Activated T-helper 1 cell treated with anti-CD3 and anti-CD28 coated beads, Interleukin-12 subunit alpha, Interleukin-12 subunit beta, Interleukin-2, Interleukin-4 antibody, amounts not matched to agents 30 ng/mL and 10 ng/mL and 1 ng/mL, durations not matched to agents 14 hours and 24 hours and 36 hours (primary cell): ENCODE measurements at regions of chr12 and their contacts with region 1.

Region 1: DNA sequence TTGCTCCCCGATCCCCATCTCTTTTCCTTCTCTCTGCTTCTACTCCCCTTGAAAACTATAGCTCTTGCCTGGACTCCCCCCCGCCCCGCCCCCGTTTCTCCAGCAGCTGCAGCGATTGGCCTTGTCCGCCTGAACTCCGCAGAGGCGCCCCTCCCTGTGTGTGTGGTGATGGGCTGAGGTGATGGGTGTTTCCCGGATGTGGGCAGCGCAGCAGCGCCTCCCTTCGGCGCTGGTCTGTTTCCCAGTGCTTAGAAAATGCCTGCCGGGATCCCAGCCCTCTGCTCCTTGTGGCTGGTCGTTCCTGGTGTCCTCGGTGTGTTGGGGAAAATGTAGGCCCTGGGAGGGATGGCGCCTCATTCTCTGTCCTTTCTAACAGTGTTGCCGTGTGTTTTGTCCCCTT is 43.3 kb downstream of the GALNT8 start:
- DNase-seq: no peak
- H3K4me3 Mint-ChIP-seq: no peak overlapping the region
- H3K27ac Mint-ChIP-seq: no peak overlapping the region
- H3K4me1 Mint-ChIP-seq: no peaks in the 10 kb centered on the region
- H3K27me3 Mint-ChIP-seq: peaks cover 2% of the 10 kb centered on the region

Region 2: DNA sequence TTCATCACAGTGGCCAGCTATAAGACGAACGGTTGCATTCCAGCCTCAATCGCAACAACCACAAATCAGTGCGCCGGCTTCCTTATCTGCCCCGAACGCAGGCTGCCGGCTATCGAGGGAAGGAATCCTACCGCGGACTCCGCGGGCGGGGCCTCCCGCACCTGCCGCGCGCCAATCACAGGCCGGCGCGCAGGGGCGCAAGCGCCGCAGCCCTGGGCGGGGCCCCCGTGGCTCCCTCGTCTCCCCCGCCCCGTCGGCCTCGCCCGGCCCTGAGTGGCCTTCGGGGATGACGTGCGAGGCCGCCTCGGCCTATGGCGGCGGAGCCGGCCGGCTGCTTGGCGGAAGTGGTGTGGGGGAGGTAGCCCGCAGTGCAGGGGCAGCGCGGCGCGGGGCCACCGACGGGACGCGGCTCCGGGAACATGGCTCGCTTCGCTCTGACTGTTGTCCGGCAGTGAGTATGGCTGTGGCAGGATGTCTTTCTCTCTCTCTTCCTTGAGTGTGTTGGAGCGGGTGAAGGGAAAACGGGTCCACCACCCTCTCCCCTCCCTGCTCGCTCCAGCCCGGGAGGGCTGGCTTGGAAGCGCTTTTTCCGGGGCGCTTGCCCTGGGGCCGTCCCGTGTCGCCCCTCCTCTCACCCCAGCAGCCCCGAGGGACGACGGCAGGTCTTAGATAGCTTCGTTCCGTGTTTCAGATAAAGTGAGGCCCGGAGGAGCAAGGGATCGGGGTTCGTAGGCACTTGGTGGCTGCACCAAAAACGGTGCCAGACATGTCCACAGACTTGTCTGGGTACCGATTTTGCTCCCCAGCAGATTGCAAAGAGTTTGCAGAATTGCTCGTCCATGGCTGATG is 442.5 kb before region 1 on chr12 and contains the start of gene TIGAR:
- intact Hi-C with region 1: no loop called
- DNase-seq: peak; percentile 93
- H3K4me3 Mint-ChIP-seq: peak within 1 kb of the TSS; percentile 93
- H3K27ac Mint-ChIP-seq: peak within 1 kb of the TSS; percentile 93
- H3K4me1 Mint-ChIP-seq: peaks cover 45% of the 10 kb centered on the region
- H3K27me3 Mint-ChIP-seq: no peaks in the 10 kb centered on the region
- total RNA-seq, gene TIGAR: 14.4 TPM in 2 replicates

Region 3: DNA sequence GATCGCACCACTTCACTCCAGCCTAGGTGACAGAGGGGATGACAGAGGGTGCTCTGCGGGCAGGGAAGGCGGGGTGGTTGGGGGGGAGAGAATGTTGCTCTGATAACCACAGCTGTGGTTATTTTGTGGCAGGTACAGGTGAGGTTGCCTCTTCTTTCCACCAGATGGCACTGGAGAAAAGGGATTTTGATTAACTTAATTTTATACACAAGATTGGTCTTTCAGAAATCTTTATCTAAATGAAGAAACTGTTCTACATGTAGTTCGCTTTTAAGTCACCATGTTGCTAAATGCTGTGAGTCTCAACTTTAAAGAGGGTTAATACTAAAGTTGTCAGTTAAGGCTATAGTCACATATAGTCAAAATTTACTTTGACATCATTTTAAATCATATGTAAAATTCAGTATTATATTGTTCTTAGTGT is 409.8 kb before region 1 on chr12:
- intact Hi-C with region 1: loop called (anchors 2 kb)
- DNase-seq: no peak
- H3K4me3 Mint-ChIP-seq: no peak overlapping the region
- H3K27ac Mint-ChIP-seq: no peak overlapping the region
- H3K4me1 Mint-ChIP-seq: peaks cover 14% of the 10 kb centered on the region
- H3K27me3 Mint-ChIP-seq: no peaks in the 10 kb centered on the region

Region 4: GRCh38 chr12:4579305-4580102 is 184.0 kb before region 1 on chr12:
- intact Hi-C with region 1: loop called (anchors 2 kb)
- DNase-seq: no peak
- H3K4me3 Mint-ChIP-seq: no peak overlapping the region
- H3K27ac Mint-ChIP-seq: no peak overlapping the region
- H3K4me1 Mint-ChIP-seq: no peaks in the 10 kb centered on the region
- H3K27me3 Mint-ChIP-seq: no peaks in the 10 kb centered on the region

Region 5: GRCh38 chr12:4604684-4605193 is 158.8 kb before region 1 on chr12:
- intact Hi-C with region 1: loop called (anchors 1 kb)
- DNase-seq: peak; percentile 67
- H3K4me3 Mint-ChIP-seq: peak overlapping the region; percentile 96
- H3K27ac Mint-ChIP-seq: peak overlapping the region; percentile 88
- H3K4me1 Mint-ChIP-seq: peaks cover 18% of the 10 kb centered on the region
- H3K27me3 Mint-ChIP-seq: peaks cover 25% of the 10 kb centered on the region